ENCODE measurements at regions of chr10 and their contacts with region 1.

Region 1: DNA sequence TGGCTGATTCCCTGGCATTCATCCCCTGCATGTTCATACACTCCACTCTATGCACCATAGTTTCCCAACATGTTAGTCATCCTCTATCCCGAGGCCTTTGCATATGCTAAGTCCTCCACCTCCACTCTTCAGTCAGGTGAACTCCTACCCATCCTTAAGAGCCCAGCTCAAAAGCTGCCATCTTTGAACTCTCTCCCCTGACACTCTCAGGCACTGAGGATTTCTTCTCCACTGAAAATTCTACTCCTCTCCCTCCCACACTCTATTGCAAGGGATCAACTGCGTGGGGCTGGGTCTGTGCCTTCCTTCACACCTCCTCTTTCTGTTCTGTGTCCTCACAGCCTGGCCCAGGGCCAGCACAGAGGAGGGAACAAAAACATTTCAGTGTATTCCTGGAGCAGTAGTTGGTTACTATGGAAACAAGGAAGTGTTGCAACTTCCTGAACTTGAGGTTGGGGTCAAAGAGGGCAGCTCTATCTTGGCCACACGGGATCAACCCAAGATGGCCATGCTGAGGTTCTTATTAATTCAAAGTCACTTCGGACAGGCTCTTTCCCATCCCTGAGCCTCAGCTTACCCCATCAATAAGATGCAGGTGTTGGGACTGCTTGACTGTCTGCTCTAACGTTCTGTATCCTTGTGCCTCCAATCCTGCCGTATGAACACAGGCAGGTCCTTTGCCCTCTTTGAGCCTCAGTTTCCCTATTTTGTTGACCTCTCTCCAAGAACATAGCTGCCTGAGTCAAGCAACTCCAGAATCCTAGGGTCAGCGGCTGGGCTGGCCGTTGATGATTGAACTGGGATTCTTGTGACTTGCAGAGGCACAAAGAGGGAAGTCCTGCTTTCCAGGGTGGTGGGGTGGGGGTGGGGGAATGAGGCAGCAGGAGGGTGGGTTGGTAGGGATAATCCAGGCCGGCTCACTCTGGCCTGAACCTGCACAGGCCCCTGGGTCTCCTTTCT is 15.5 kb downstream of the ZMIZ1 start:
- DNase-seq: peak; percentile 95 to 97
- ATAC-seq: peak in 1 of 4 donors; percentile 9
- H3K4me3 ChIP-seq: no peak overlapping the region
- H3K27ac ChIP-seq: peak overlapping the region; percentile 50
- H3K4me1 ChIP-seq: peaks cover 92% of the 10 kb centered on the region
- H3K27me3 ChIP-seq: no peaks in the 10 kb centered on the region
- CTCF ChIP-seq: no peak

Region 2: GRCh38 chr10:79116801-79117723 is 32.8 kb after region 1 on chr10:
- intact Hi-C with region 1: loop called (anchors 1 to 2 kb)
- DNase-seq: peak in 1 of 2 donors; percentile 48
- ATAC-seq: peak in 1 of 4 donors; percentile 15
- H3K4me3 ChIP-seq: no peak overlapping the region
- H3K27ac ChIP-seq: peak overlapping the region; percentile 0
- H3K4me1 ChIP-seq: peaks cover 61% of the 10 kb centered on the region
- H3K27me3 ChIP-seq: no peaks in the 10 kb centered on the region
- CTCF ChIP-seq: no peak

Region 3: GRCh38 chr10:79123547-79123963 is 39.3 kb after region 1 on chr10:
- intact Hi-C with region 1: loop called in 1 of 2 experiments (anchors 2 kb)
- DNase-seq: peak in 1 of 2 donors; percentile 74
- ATAC-seq: peak; percentile 80 to 90 (median 88)
- H3K4me3 ChIP-seq: no peak overlapping the region
- H3K27ac ChIP-seq: peak overlapping the region; percentile 71
- H3K4me1 ChIP-seq: peaks cover 47% of the 10 kb centered on the region
- H3K27me3 ChIP-seq: no peaks in the 10 kb centered on the region
- CTCF ChIP-seq: no peak

Region 4: GRCh38 chr10:79137826-79138225 is 53.5 kb after region 1 on chr10:
- intact Hi-C with region 1: loop called (anchors 5 kb)
- DNase-seq: peak; percentile 65 to 74
- ATAC-seq: peak; percentile 68 to 81 (median 75)
- H3K4me3 ChIP-seq: peak overlapping the region; percentile 7
- H3K27ac ChIP-seq: peak overlapping the region; percentile 73
- H3K4me1 ChIP-seq: peaks cover 79% of the 10 kb centered on the region
- H3K27me3 ChIP-seq: no peaks in the 10 kb centered on the region
- CTCF ChIP-seq: no peak

Measured in psoas muscle (tissue), 8 donors.